IMR-90 (cell line): ENCODE measurements at regions of chr7 and their contacts with region 1.

Region 1: GRCh38 chr7:5557920-5558401 is 134.3 kb upstream of the TNRC18 start:
- DNase-seq: peak; percentile 11
- ATAC-seq: no peak
- H3K4me3 ChIP-seq: no peak overlapping the region
- H3K27ac ChIP-seq: peak overlapping the region; percentile 77
- H3K4me1 ChIP-seq: peaks cover 24% of the 10 kb centered on the region
- H3K27me3 ChIP-seq: no peaks in the 10 kb centered on the region
- CTCF ChIP-seq: no peak
- POLR2A ChIP-seq: no peak
- RAD21 ChIP-seq: no peak

Region 2: DNA sequence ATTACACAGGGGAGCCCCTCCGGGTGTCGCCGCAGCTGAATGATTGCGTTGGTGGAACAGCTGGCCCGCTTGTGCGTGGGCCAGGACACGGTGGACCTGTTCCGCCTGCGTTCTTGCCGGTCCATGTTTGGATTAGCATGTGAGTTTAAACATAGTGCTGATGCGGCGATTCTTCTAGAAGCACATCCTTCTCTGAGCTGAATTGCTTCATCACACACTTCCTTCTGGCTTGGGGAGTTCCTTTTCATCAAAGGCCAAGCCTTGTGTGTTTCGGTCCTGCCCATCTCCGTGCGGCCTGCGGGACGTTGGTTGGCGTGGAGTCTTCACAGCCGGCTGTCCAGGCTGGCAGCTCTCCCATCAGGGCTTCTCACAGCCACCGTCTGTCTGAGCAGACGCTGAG is 320.7 kb before region 1 on chr7:
- CTCF ChIA-PET with region 1: interaction called, 5 read pairs
- POLR2A ChIA-PET with region 1: interaction called, 6 read pairs
- dilution Hi-C with region 1: no loop called
- in situ Hi-C with region 1: no loop called
- intact Hi-C with region 1: loop called (anchors 1 kb)
- DNase-seq: peak; percentile 40
- ATAC-seq: peak; percentile 21
- H3K4me3 ChIP-seq: no peak overlapping the region
- H3K27ac ChIP-seq: no peak overlapping the region
- H3K4me1 ChIP-seq: peaks cover 4% of the 10 kb centered on the region
- H3K27me3 ChIP-seq: no peaks in the 10 kb centered on the region; the same call in 1 of the 2 replicates
- CTCF ChIP-seq: no peak
- POLR2A ChIP-seq: no peak
- RAD21 ChIP-seq: no peak

Region 3: GRCh38 chr7:5704534-5704922 is 146.6 kb after region 1 on chr7:
- CTCF ChIA-PET with region 1: no interaction called
- POLR2A ChIA-PET with region 1: no interaction called
- dilution Hi-C with region 1: no loop called
- in situ Hi-C with region 1: no loop called
- intact Hi-C with region 1: no loop called
- DNase-seq: peak; percentile 84
- ATAC-seq: peak; percentile 81
- H3K4me3 ChIP-seq: no peak overlapping the region
- H3K27ac ChIP-seq: no peak overlapping the region
- H3K4me1 ChIP-seq: peaks cover 20% of the 10 kb centered on the region
- H3K27me3 ChIP-seq: no peaks in the 10 kb centered on the region
- CTCF ChIP-seq: peak; percentile 93
- POLR2A ChIP-seq: no peak
- RAD21 ChIP-seq: peak; percentile 91